ENCODE measurements at regions of chr13 and their contacts with region 1.

Region 1: GRCh38 chr13:27533155-27533643 is 82.8 kb upstream of the MTIF3 start:
- DNase-seq: peak; percentile 71 to 85
- H3K4me3 ChIP-seq: no peak overlapping the region
- H3K27ac ChIP-seq: no peak overlapping the region
- H3K4me1 ChIP-seq: peaks cover 0 to 7% (median 3%) of the 10 kb centered on the region in 4 donors
- H3K27me3 ChIP-seq: peaks cover 0 to 12% of the 10 kb centered on the region in 2 donors
- CTCF ChIP-seq: peak; percentile 84 to 90

Region 2: DNA sequence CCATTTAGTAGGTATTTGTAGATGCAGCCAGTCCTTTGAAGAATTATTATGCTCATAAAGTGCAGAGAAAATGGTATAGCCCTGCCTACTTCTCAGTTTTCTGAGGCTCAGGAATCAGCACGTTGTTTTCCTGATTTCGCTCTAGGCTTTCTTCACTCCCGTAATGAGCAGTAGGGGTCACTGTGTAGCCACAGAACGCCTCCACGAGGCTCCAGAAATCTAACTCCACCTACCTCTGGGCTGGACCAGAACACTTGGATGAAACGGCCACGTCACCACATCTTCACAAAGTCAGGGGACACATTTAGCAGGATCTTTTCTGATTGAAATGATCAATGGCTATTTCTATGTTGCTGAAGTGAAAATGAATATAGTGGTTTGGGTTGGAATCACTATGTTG is 158.5 kb before region 1 on chr13:
- intact Hi-C with region 1: loop called (anchors 5 kb)
- DNase-seq: peak; percentile 42 to 77
- H3K4me3 ChIP-seq: no peak overlapping the region
- H3K27ac ChIP-seq: no peak overlapping the region
- H3K4me1 ChIP-seq: peaks cover 0 to 8% (median 3%) of the 10 kb centered on the region in 4 donors
- H3K27me3 ChIP-seq: peaks cover 0 to 29% of the 10 kb centered on the region in 2 donors
- CTCF ChIP-seq: peak; percentile 65 to 68

Region 3: DNA sequence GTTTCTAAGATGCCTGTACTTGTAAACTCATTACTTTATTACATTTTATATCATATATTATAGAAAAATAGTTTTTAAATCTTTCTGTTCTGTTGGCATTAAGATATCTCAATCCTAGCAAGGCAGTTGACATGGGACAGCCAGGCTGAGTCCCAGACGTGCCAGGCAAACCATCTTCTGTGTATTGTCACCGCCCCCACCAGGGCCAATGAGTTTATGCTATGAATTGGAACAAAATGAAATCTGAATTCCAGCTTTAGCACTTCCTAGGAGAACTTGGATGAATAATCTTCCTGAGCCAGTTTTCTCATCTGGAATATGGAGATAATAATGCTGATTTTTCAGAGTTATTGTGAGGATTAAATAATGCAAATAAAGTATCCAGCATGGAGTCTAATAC is 179.2 kb after region 1 on chr13:
- intact Hi-C with region 1: loop called (anchors 10 kb)
- DNase-seq: peak in 1 of 2 donors; percentile 40
- H3K4me3 ChIP-seq: no peak overlapping the region
- H3K27ac ChIP-seq: no peak overlapping the region
- H3K4me1 ChIP-seq: no peaks in the 10 kb centered on the region
- H3K27me3 ChIP-seq: peaks cover 0 to 3% of the 10 kb centered on the region in 2 donors
- CTCF ChIP-seq: peak; percentile 38 to 39

Region 4: GRCh38 chr13:27826379-27827353 is 293.5 kb after region 1 on chr13:
- intact Hi-C with region 1: loop called (anchors 5 kb)
- DNase-seq: peak; percentile 64 to 85
- H3K4me3 ChIP-seq: peak overlapping the region in 1 of 2 donors; percentile 27
- H3K27ac ChIP-seq: no peak overlapping the region
- H3K4me1 ChIP-seq: peaks cover 0 to 10% (median 6%) of the 10 kb centered on the region in 4 donors
- H3K27me3 ChIP-seq: peaks cover 0 to 65% of the 10 kb centered on the region in 2 donors
- CTCF ChIP-seq: peak; percentile 87 to 88

Region 5: GRCh38 chr13:27980280-27980998 is 447.2 kb after region 1 on chr13:
- intact Hi-C with region 1: loop called (anchors 10 kb)
- DNase-seq: peak in 1 of 2 donors; percentile 58
- H3K4me3 ChIP-seq: no peak overlapping the region
- H3K27ac ChIP-seq: no peak overlapping the region
- H3K4me1 ChIP-seq: peaks cover 0 to 42% (median 30%) of the 10 kb centered on the region in 4 donors
- H3K27me3 ChIP-seq: peaks cover 0 to 86% of the 10 kb centered on the region in 2 donors
- CTCF ChIP-seq: no peak